ENCODE measurements at regions of chr5 and their contacts with region 1.

Region 1: DNA sequence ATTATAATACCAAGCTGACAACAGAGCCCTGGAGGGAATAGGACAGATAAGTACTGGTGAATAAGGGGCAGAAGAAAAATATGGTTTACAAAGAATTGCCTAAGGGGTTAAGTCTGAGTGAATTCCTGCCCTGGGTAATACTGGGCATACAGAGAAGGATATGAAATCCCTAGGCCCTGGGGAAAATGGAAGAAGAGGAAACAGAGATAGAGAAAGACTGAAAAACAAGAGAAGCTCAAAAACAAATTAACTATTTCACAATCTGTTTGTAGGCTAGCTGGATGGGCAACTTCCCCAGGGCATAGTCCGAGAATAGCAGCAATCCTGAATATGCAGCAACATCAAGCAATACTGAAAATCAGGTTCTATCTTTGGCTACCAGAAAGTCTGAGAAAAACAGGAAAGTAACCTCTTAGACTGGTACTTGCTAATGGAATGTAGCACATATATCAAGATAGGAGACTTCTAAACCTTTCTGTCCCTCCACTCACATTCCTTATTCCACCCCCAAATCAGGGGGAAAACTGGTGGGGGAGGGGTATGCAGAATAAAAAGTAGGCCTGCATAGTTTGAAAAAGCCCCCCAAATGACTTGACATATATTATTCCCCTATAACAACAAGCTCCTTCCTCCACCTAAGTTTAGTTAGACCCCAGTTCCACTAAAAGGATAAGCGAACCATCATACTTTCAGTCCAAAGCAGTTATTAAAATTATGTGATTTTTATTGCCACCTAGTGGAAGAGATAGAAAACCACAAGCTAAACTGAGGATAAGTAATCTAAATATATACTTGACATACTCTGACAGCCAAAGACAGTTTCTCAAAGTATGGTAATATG is 20.6 kb downstream of the SLC38A9 start:
- DNase-seq: no peak
- H3K4me3 ChIP-seq: peak overlapping the region; percentile 17 to 56
- H3K27ac ChIP-seq: peak overlapping the region; percentile 40 to 46
- H3K4me1 ChIP-seq: peaks cover 6 to 8% of the 10 kb centered on the region in 2 donors
- H3K27me3 ChIP-seq: no peaks in the 10 kb centered on the region
- CTCF ChIP-seq: peak; percentile 59 to 69 (median 68)

Region 2: DNA sequence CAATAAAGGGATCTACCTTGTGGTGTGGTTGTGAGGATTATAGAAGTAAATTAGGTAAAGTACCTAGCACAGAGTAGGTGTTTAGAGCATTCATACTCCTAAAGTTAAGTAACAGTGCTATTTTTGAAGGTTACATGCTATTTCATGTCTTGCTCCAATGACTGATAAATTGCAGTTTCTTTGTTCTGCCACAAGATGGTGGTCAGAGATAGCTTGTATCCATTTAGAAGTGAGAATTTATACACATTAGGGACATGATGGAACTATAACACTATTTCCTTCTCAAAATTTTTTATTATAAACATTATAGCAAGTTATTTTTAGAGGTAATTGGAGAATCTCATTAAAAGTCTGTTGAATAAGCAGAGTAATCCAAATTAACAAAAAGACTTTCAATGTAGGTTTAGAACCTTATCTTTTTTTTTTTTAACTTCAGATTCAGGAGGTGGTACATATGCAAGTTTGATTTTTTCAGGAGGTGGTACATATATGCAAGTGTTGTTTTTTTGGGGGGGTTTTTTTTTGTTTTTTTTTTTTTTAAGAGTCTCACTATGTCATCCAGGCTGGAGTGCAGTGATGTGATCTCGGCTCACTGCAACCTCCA is 366.6 kb before region 1 on chr5:
- intact Hi-C with region 1: loop called (anchors 2 kb)
- DNase-seq: no peak
- H3K4me3 ChIP-seq: no peak overlapping the region
- H3K27ac ChIP-seq: no peak overlapping the region
- H3K4me1 ChIP-seq: peaks cover 0 to 6% of the 10 kb centered on the region in 2 donors
- H3K27me3 ChIP-seq: no peaks in the 10 kb centered on the region
- CTCF ChIP-seq: peak; percentile 62 to 85 (median 73)

Region 3: DNA sequence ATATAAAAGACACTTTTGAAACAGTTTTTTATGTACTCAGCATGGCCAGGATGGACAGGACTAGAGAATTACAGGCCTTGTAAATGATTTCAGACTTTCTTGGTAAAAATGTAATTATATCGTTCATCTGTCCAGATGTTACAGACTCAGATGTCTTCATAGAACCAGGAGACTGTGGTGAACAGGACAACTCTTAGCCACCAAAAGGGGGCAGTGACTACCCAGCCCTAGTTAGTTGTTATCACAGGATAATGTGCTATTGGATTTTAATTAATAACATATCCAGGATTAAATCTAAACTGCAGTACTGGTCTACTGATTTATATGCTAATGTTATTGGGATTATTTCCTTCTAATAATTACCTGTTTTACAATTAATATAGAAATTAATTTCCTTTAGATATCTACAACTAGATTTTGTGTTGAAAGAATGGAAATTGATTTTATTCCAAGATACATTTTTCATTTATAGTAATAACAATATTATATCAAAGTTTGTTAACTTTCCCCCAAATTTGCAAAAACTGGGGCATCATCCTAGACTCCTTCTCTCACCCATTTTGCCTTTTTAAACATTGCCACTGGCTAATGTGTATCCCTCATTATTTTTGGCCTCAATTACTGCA is 284.3 kb before region 1 on chr5:
- intact Hi-C with region 1: loop called (anchors 1 kb)
- DNase-seq: no peak
- H3K4me3 ChIP-seq: no peak overlapping the region
- H3K27ac ChIP-seq: no peak overlapping the region
- H3K4me1 ChIP-seq: no peaks in the 10 kb centered on the region
- H3K27me3 ChIP-seq: no peaks in the 10 kb centered on the region
- CTCF ChIP-seq: peak; percentile 42 to 62 (median 50)

Region 4: DNA sequence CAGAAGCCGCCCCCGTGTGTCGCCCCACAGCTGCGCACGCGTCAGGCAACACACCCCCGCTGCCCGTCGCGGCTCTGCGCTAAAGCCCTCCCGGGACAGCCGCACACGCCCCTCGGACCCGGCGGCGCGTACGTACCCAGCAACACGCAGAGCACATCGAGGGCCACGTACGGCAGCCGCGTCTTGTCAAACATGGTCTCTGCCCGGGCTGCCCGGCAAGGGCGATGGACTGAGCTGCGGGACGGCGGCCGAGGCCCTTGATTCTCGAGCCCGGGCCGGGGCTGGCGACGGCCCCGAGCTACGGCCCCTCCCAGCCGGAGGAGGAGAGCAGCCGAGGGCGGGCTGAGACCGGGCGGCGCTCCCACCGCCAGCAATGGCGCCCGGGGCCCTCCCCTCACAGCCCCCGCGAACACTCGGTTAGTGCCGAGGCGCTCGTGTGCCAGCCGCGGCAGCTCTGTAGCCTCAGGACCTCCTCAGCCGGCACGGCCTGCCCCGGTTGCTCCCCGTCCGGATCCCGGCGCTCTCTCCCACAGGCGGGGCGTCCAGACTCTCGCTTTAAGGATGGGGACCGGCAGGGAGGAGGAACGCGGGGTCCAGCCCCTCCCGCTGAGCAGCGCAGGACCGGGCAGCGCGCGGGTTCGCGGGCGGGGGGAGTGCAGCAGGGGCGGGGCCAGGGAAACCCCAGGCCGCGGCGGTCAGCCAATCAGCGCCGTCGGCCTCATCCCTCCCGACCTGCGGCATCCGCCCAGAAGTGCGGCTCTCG is 156.9 kb before region 1 on chr5 and contains the start of gene PLPP1:
- intact Hi-C with region 1: loop called (anchors 2 kb)
- DNase-seq: peak; percentile 70 to 95
- H3K4me3 ChIP-seq: peak within 1 kb of the TSS; percentile 87 to 91
- H3K27ac ChIP-seq: peak within 1 kb of the TSS; percentile 97 to 99
- H3K4me1 ChIP-seq: peaks cover 0 to 12% of the 10 kb centered on the region in 2 donors
- H3K27me3 ChIP-seq: no peaks in the 10 kb centered on the region
- CTCF ChIP-seq: peak in 1 of 3 experiments; percentile 19
- total RNA-seq, gene PLPP1: 1,314 TPM